ENCODE measurements at regions of chr7 and their contacts with region 1.

Region 1: DNA sequence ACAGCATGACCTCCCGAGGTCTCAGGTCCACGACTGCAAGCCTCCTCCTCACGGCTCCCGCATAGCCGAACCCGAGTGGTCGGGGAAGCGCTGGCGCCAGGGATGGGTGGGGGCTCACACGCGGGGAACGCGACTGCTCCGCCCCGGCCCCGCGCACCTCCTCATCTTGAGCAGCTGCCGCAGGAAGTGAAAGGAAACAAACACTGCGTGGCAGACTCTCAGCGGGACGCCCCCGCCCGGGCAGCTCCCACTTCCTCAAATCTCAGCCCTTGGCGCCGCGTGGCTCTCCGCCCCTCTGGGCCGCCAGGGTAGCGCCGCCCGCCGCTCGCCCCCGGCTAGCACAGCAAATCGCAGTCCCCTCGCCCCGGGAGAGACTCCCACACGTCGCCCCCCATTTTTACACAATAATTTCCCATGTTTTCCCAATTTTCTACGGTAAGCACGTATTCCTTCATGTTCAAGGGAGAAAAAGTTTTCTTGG is at the start of gene TMEM243:
- DNase-seq: peak; percentile 72 to 91 (median 89)
- ATAC-seq: peak; percentile 81
- H3K4me3 ChIP-seq: peak within 1 kb of the TSS; percentile 90
- H3K4me3 Mint-ChIP-seq: peak within 1 kb of the TSS; percentile 96 to 100 (median 99)
- H3K27ac ChIP-seq: peak within 1 kb of the TSS; percentile 96
- H3K27ac Mint-ChIP-seq: peak within 1 kb of the TSS; percentile 94 to 100 (median 99)
- H3K4me1 ChIP-seq: peaks cover 22 to 41% of the 10 kb centered on the region in 2 donors
- H3K4me1 Mint-ChIP-seq: peaks cover 18 to 44% (median 32%) of the 10 kb centered on the region in 7 donors
- H3K27me3 ChIP-seq: no peaks in the 10 kb centered on the region
- H3K27me3 Mint-ChIP-seq: peaks cover 0 to 12% (median 0%) of the 10 kb centered on the region in 5 donors
- total RNA-seq, gene TMEM243: 50.0 to 153 (median 125) TPM

Region 2: GRCh38 chr7:86900886-86901285 is 318.7 kb before region 1 on chr7:
- CTCF ChIA-PET with region 1: no interaction called
- POLR2A ChIA-PET with region 1: no interaction called
- intact Hi-C with region 1: no loop called
- DNase-seq: no peak
- ATAC-seq: no peak
- H3K4me3 ChIP-seq: no peak overlapping the region
- H3K4me3 Mint-ChIP-seq: no peak overlapping the region
- H3K27ac ChIP-seq: no peak overlapping the region
- H3K27ac Mint-ChIP-seq: no peak overlapping the region
- H3K4me1 ChIP-seq: no peaks in the 10 kb centered on the region
- H3K4me1 Mint-ChIP-seq: peaks cover 0 to 4% (median 0%) of the 10 kb centered on the region in 7 donors
- H3K27me3 ChIP-seq: no peaks in the 10 kb centered on the region
- H3K27me3 Mint-ChIP-seq: peaks cover 0 to 11% (median 3%) of the 10 kb centered on the region in 5 donors

Region 3: DNA sequence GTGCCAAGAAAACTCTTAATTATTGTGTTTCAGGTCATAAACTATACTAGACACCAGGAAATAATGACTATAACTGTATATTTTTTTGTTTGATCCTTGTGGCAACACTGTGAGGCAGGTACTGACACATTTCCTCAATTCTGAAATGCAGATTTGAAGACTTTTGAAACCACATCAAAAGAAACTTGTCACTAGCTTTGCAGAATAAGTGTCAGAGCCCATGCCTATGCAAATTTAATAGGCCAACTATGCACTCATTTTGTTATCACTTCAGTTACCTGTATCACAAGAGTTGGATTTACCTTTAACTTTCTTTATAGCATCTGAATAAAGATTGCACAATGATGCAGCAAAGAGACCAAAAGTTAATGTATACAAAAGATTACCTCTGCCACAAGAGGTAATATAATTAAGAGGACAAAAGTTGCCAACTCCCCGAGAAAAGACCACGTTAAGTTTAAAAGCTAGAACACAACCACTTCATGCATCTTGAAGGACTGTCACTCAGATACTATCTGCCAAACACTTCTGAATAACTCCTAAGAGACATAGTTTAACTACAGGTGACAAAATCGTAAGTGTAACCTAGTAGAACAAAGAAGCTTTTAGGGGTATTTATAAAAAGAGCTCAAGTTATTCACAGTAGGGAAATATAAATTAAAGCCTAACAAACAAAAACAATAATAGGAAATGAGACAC is 240.6 kb before region 1 on chr7:
- CTCF ChIA-PET with region 1: no interaction called
- POLR2A ChIA-PET with region 1: interaction called, 13 read pairs
- intact Hi-C with region 1: loop called in 1 of 2 experiments (anchors 1 kb)
- DNase-seq: peak in 7 of 9 donors; percentile 69 to 92 (median 85)
- ATAC-seq: peak; percentile 91
- H3K4me3 ChIP-seq: no peak overlapping the region
- H3K4me3 Mint-ChIP-seq: peak overlapping the region in 8 of 10 donors; percentile 23 to 65 (median 50)
- H3K27ac ChIP-seq: peak overlapping the region; percentile 63
- H3K27ac Mint-ChIP-seq: peak overlapping the region in 8 of 9 donors; percentile 71 to 97 (median 87)
- H3K4me1 ChIP-seq: peaks cover 22 to 30% of the 10 kb centered on the region in 2 donors
- H3K4me1 Mint-ChIP-seq: peaks cover 14 to 53% (median 35%) of the 10 kb centered on the region in 7 donors
- H3K27me3 ChIP-seq: no peaks in the 10 kb centered on the region
- H3K27me3 Mint-ChIP-seq: no peaks in the 10 kb centered on the region

Region 4: DNA sequence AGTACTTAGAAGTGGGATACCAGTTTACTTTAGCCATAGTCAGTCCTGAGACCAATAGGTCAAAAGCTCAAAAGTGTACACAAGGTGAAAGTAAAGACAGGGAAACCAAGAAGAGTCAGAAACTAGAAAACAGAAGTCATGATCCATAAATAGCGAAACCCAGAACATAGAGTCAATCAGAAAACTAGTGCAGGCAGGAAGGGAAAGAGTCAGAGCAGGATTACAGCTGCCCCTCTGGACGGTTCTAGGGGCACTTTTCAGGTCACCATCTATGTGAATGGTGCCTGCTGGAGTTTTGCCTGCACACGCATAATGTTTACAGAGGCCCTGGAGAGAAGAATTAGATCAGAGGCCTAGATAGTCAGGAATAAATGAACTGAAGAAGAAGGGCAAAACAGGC is 89.7 kb before region 1 on chr7:
- CTCF ChIA-PET with region 1: no interaction called
- POLR2A ChIA-PET with region 1: no interaction called
- intact Hi-C with region 1: no loop called
- DNase-seq: no peak
- ATAC-seq: no peak
- H3K4me3 ChIP-seq: no peak overlapping the region
- H3K4me3 Mint-ChIP-seq: no peak overlapping the region
- H3K27ac ChIP-seq: no peak overlapping the region
- H3K27ac Mint-ChIP-seq: no peak overlapping the region
- H3K4me1 ChIP-seq: no peaks in the 10 kb centered on the region
- H3K4me1 Mint-ChIP-seq: peaks cover 0 to 7% (median 0%) of the 10 kb centered on the region in 7 donors
- H3K27me3 ChIP-seq: no peaks in the 10 kb centered on the region
- H3K27me3 Mint-ChIP-seq: peaks cover 0 to 12% (median 8%) of the 10 kb centered on the region in 5 donors

Region 5: DNA sequence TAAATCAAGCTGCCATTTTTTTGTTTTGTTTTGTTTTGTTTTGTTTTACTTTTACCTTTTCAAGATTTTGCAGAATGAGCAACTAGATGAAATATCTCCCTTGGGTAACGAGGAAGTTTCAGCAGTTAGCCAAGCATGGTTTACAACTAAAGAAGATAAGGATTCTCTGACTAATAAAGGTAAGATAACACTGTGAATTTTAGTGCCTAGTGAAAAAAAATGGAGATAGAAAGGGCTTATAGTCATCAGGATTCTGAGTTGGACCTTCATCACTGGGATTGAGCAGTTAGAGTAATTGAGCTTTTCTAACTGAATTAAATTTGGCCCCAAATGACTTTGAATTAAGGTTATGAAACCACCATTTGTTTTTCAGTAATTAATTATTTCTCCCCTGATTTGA is 46.1 kb before region 1 on chr7:
- CTCF ChIA-PET with region 1: interaction called, 3 read pairs
- POLR2A ChIA-PET with region 1: interaction called, 14 read pairs
- intact Hi-C with region 1: no loop called
- DNase-seq: no peak
- ATAC-seq: no peak
- H3K4me3 ChIP-seq: no peak overlapping the region
- H3K4me3 Mint-ChIP-seq: no peak overlapping the region
- H3K27ac ChIP-seq: no peak overlapping the region
- H3K27ac Mint-ChIP-seq: peak overlapping the region in 7 of 9 donors; percentile 6 to 75 (median 45)
- H3K4me1 ChIP-seq: no peaks in the 10 kb centered on the region
- H3K4me1 Mint-ChIP-seq: peaks cover 17 to 48% (median 37%) of the 10 kb centered on the region in 7 donors
- H3K27me3 ChIP-seq: no peaks in the 10 kb centered on the region
- H3K27me3 Mint-ChIP-seq: no peaks in the 10 kb centered on the region

Region 6: DNA sequence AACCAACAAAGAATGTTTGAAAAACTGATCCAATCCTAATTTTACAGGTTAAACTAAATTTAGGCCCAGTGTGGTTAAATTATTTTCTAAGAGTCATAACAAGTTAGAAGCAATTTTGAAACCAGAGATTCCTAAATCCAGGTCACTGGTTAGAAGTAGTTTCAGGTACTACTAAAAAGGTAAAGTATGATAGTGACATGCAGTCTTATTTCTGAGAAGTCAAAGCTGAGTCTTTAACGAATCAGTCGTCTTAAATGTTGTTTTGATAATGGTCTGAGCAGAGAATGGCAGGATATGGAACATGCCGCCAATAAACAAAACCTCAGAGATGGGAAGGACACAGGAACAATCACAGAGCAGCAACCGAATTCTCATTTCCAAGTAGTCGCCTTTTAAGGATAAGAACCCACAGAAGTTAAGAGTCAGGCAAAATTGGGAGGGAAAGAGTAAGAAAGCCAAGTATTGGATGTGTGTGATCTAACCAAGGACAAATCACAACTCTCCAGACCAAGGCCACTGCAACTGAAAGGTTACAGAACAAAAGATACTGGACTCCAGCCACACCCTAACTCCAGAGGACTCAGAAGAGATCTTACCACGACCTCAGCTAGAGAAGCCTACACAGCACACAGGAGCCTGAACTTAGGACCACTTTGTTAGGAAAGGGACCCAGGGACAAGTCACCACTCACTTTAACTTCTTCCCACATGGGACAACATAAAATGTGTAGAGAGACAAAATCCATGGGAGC is 19.7 kb before region 1 on chr7:
- CTCF ChIA-PET with region 1: interaction called, 9 read pairs
- POLR2A ChIA-PET with region 1: interaction called, 35 read pairs
- intact Hi-C with region 1: loop called (anchors 1 to 2 kb)
- DNase-seq: no peak
- ATAC-seq: peak; percentile 10
- H3K4me3 ChIP-seq: no peak overlapping the region
- H3K4me3 Mint-ChIP-seq: peak overlapping the region in 5 of 10 donors; percentile 3 to 15 (median 11)
- H3K27ac ChIP-seq: peak overlapping the region; percentile 36
- H3K27ac Mint-ChIP-seq: peak overlapping the region in 8 of 9 donors; percentile 37 to 88 (median 79)
- H3K4me1 ChIP-seq: peaks cover 0 to 40% of the 10 kb centered on the region in 2 donors
- H3K4me1 Mint-ChIP-seq: peaks cover 35 to 81% (median 68%) of the 10 kb centered on the region in 7 donors
- H3K27me3 ChIP-seq: no peaks in the 10 kb centered on the region
- H3K27me3 Mint-ChIP-seq: no peaks in the 10 kb centered on the region

Region 7: GRCh38 chr7:87628780-87629569 is 409.4 kb after region 1 on chr7:
- CTCF ChIA-PET with region 1: no interaction called
- POLR2A ChIA-PET with region 1: no interaction called
- intact Hi-C with region 1: loop called (anchors 1 to 10 kb)
- DNase-seq: peak in 8 of 9 donors; percentile 15 to 51 (median 36)
- ATAC-seq: peak; percentile 29
- H3K4me3 ChIP-seq: peak overlapping the region; percentile 64
- H3K4me3 Mint-ChIP-seq: peak overlapping the region; percentile 74 to 92 (median 83)
- H3K27ac ChIP-seq: peak overlapping the region; percentile 38
- H3K27ac Mint-ChIP-seq: peak overlapping the region in 5 of 9 donors; percentile 30 to 83 (median 54)
- H3K4me1 ChIP-seq: peaks cover 0 to 5% of the 10 kb centered on the region in 2 donors
- H3K4me1 Mint-ChIP-seq: peaks cover 7 to 14% (median 10%) of the 10 kb centered on the region in 7 donors
- H3K27me3 ChIP-seq: no peaks in the 10 kb centered on the region
- H3K27me3 Mint-ChIP-seq: peaks cover 4 to 32% (median 21%) of the 10 kb centered on the region in 5 donors

Measured in naive thymus-derived CD4-positive, alpha-beta T cell (primary cell).